Cardiac septum (tissue), 1 donor: ENCODE measurements at regions of chr1 and their contacts with region 1.

Region 1: DNA sequence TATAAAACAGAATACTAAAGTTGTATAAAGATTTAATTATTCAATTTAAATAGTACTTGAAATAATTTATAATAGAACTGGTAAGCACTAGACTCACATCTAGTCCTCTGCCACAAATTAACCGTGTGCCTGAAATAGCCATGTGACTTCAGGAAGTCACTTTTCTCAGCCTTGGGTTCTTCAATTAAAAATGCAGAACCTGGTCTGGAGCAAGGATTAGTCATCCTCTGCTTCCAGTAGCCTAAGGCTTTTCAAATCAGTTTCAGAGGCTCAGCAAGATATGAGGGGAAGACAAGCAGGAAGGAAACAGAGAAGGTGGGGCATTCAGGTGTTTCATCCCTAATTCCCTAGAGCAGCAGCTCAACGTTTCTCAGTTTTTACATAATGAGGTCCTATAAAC is 23.0 kb downstream of the DPH5 start:
- DNase-seq: no peak

Region 2: DNA sequence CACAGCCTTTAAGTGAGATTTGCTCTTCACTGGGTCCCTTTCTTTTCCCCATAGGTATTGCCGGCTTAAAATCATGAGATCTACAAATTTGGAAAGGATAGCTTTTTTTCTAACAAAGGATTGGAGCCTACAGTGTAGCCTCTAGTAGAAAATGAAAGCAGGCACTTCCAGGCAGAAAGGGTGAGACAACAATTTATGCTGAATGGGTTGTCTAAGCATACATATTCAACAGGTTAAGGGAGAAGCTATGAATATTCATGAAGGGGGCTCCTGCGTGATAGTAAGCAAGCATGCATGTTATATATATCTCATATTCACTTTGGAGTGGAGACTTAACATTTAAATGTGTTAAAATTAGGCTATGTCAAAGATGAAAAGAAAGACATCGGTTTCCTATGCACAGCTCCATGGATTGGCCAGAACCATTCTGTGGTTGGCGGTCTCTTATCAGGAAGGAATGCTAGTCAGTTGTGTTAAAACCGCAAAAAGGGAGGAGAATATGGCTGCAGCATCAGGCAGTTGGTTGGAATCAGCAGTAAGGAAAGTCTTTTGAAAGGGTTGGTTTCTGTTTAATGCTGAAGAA is 217.0 kb before region 1 on chr1:
- intact Hi-C with region 1: no loop called
- DNase-seq: no peak

Region 3: DNA sequence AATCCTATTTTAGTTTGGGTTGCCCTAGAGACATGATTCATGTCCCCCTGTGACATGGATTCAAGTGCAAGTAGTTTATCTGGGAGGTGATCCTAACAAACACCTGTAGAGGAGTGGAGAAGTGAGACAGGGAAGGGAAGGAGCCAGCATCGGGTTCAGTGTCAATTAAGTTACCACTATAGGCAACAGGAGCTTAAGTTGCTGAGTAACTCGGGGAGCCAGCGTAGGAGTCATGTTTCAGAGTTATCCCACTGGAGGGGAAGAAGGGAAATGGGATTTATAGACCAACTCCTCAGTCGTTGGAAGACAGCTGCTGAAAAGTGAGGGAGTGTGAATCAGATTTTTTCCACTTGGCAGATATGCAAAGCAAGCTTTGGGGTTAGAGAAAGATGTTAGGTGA is 51.8 kb before region 1 on chr1:
- intact Hi-C with region 1: no loop called
- DNase-seq: no peak

Region 4: DNA sequence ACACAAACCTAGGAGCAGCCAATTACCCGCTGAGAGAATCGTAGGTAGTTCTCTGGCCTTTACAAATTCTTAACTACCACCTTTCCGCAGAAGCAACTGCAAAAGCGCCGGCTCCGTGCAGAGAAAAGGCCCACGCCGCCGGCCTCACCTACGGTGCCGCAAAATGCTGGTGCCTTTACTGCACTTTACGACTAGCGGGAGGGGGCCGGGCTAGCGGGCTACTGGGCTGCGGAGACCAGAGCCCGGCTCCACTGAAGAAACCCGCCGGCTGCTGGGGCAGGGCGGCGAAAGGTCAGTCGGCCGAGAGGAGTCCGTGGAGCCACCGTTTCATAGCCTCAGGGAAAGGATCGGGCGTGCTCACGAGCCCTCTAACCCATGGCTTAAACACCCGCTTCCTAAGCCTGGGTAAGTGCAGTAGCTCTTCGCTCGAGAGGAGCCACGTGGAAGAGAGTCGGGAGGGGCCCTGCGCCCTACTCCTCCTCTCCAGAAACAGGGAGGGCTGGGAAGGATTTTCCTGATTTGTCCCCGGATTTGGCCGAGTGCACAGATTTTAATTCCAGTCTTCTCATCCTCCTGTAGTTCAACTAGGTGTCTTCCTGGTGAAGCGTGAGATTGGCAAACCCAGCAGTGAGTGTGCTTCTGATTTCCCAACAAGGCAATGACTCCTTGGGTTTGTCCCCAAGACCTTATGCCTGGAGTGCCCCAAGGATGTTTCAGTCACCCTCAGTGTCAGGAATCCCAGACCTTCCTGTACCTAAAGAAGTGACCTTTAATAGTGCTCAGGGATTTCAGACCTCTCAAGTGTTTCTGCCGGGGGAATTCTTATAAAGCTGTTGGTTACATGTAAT is 23.3 kb after region 1 on chr1 and contains the start of gene DPH5:
- intact Hi-C with region 1: loop called (anchors 1 kb)
- DNase-seq: peak; percentile 96
- total RNA-seq, gene DPH5: 35.4 TPM